ENCODE measurements at regions of chr5 and their contacts with region 1.

Region 1: DNA sequence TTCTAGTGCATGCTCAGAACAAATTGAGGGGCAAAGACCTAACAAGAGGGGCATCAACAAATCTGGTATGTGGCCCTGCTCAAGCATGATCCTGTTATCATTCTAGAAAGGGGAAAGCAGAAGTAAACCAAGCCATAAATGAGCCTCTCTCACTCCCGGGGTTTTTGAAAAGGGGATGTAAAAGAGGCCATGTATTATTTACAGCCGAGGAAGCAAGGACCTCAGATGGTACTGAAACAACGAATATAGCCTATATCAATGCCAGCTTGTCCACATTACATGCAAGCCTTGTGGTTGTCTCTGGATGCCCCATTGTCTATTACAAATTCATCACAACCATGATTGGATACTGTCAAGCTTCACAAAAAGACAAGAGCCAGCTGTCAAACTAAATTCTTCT is 211.3 kb downstream of the DCP2 start:
- DNase-seq: no peak
- H3K4me3 ChIP-seq: no peak overlapping the region
- H3K27ac ChIP-seq: no peak overlapping the region
- H3K4me1 ChIP-seq: no peaks in the 10 kb centered on the region
- CTCF ChIP-seq: no peak

Region 2: GRCh38 chr5:113140837-113141661 is 46.9 kb before region 1 on chr5:
- CTCF ChIA-PET with region 1: no interaction called
- POLR2A ChIA-PET with region 1: no interaction called
- intact Hi-C with region 1: loop called (anchors 1 kb)
- DNase-seq: no peak
- H3K4me3 ChIP-seq: no peak overlapping the region
- H3K27ac ChIP-seq: no peak overlapping the region
- H3K4me1 ChIP-seq: no peaks in the 10 kb centered on the region
- CTCF ChIP-seq: no peak

Region 3: GRCh38 chr5:113271015-113271414 is 83.1 kb after region 1 on chr5:
- CTCF ChIA-PET with region 1: no interaction called
- POLR2A ChIA-PET with region 1: no interaction called
- intact Hi-C with region 1: no loop called
- DNase-seq: no peak
- H3K4me3 ChIP-seq: no peak overlapping the region
- H3K27ac ChIP-seq: no peak overlapping the region
- H3K4me1 ChIP-seq: no peaks in the 10 kb centered on the region
- CTCF ChIP-seq: no peak

Measured in OCI-LY7 (cell line).